MCF 10A (cell line): ENCODE measurements at regions of chr2 and their contacts with region 1.

Region 1: GRCh38 chr2:153347818-153348495 is 130.6 kb downstream of the RPRM start:
- DNase-seq: no peak
- H3K4me3 Mint-ChIP-seq: no peak overlapping the region
- H3K27ac Mint-ChIP-seq: no peak overlapping the region
- H3K4me1 Mint-ChIP-seq: no peaks in the 10 kb centered on the region
- H3K27me3 Mint-ChIP-seq: no peaks in the 10 kb centered on the region
- CTCF ChIP-seq: no peak

Region 2: GRCh38 chr2:153320879-153321278 is 27.1 kb before region 1 on chr2:
- CTCF ChIA-PET with region 1: no interaction called
- POLR2A ChIA-PET with region 1: no interaction called
- intact Hi-C with region 1: no loop called
- DNase-seq: no peak
- H3K4me3 Mint-ChIP-seq: no peak overlapping the region
- H3K27ac Mint-ChIP-seq: no peak overlapping the region
- H3K4me1 Mint-ChIP-seq: no peaks in the 10 kb centered on the region
- H3K27me3 Mint-ChIP-seq: no peaks in the 10 kb centered on the region
- CTCF ChIP-seq: no peak

Region 3: DNA sequence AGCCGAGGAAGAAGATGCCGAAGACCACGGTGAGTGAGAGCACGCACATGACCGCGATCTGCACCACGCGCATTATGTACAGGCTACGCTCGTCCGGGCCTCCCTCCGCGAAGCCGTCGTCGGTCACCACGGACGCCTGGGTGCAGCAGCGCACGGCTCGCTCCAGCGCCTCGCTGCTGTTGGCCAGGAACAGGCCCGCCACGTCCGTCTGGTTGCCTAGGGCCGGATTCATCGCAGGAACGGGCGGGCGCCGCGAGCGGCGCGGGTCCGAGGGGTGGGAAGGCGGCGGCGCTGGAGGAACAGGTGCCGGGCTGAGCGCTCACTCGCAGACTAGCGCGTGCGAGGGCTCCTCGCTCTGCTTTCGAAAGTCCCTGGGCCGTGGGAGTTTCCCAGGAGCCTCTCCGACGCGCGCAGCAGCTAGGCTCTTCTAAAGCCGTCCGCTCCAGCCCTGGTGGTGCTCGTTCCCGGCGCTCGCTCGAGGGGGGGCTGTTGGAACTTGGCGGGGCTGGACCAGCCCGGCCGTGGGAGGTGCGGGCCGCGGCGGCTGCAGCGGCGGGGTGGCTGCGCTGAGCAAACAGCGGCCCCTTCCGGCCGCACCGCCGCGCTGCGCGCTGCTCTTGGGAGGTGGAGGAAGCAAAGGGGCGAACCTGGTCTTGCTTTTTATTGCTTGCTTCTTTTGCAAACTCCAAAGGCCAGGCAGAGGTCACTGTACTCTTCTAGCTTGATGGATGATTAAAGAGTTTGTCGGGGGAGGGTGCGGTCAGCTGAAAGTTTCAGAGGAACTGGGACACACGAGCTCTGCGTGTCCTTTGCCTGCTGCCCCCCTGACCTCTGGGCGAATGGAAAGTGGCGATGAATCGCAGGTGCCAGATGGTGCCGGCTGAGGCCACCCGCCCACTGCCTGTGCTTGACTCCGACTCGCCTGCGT is 130.6 kb after region 1 on chr2 and contains the start of gene RPRM:
- CTCF ChIA-PET with region 1: interaction called, 11 read pairs
- POLR2A ChIA-PET with region 1: no interaction called
- intact Hi-C with region 1: loop called (anchors 10 kb)
- DNase-seq: peak; percentile 52
- H3K4me3 Mint-ChIP-seq: peak within 1 kb of the TSS; percentile 55
- H3K27ac Mint-ChIP-seq: no peak within 1 kb of the TSS
- H3K4me1 Mint-ChIP-seq: peaks cover 7% of the 10 kb centered on the region
- H3K27me3 Mint-ChIP-seq: peaks cover 48% of the 10 kb centered on the region
- CTCF ChIP-seq: peak; percentile 97
- total RNA-seq, gene RPRM: not detected in 2 replicates

Region 4: DNA sequence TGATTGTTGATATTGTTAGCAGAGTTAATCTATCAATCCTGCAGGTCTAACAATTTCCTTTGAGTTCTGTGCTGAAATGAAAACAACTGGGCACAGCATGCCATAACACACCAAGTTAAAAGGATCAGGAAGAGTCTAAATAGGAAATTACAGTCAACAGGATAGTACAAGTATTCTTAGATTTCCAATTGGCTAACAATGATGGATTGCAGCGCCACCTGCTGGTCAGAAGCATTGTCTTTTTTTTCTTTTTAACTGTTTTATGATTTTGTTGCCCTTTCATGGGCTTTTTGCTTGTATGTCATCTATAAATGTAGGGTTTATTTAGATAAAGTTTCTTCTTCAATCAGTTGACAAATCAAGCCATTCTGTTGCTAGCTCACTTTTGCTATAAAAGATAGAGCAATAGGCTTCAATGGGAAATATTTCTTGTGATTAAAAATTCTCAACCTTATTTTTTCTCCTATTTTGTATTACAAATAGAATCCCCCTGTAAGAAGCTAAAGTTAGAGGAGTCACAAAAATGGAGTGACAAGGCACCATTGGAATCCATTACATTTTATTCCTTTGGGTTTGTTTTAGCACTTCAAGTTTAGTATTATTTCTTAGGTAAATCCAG is 171.4 kb after region 1 on chr2:
- CTCF ChIA-PET with region 1: no interaction called
- POLR2A ChIA-PET with region 1: no interaction called
- intact Hi-C with region 1: loop called (anchors 1 kb)
- DNase-seq: peak; percentile 70
- H3K4me3 Mint-ChIP-seq: no peak overlapping the region
- H3K27ac Mint-ChIP-seq: no peak overlapping the region
- H3K4me1 Mint-ChIP-seq: no peaks in the 10 kb centered on the region
- H3K27me3 Mint-ChIP-seq: peaks cover 33% of the 10 kb centered on the region
- CTCF ChIP-seq: peak; percentile 73